HepG2 (cell line): ENCODE measurements at regions of chr3 and their contacts with region 1.

Region 1: GRCh38 chr3:20039766-20040475 is at the start of gene KAT2B:
- DNase-seq: peak; percentile 47
- ATAC-seq: peak; percentile 81
- H3K4me3 ChIP-seq: peak within 1 kb of the TSS; percentile 76 to 84 (median 78)
- H3K27ac ChIP-seq: peak within 1 kb of the TSS; percentile 46
- H3K4me1 ChIP-seq: peaks cover 36% of the 10 kb centered on the region
- H3K27me3 ChIP-seq: peaks cover 0 to 1% of the 10 kb centered on the region in 2 experiments; a peak in 3 of 5 replicates
- CTCF ChIP-seq: peak; percentile 77
- EP300 ChIP-seq: no peak
- POLR2A ChIP-seq: no peak
- RAD21 ChIP-seq: peak; percentile 57
- total RNA-seq, gene KAT2B: 0.97 and 1.00 TPM in 2 replicates

Region 2: DNA sequence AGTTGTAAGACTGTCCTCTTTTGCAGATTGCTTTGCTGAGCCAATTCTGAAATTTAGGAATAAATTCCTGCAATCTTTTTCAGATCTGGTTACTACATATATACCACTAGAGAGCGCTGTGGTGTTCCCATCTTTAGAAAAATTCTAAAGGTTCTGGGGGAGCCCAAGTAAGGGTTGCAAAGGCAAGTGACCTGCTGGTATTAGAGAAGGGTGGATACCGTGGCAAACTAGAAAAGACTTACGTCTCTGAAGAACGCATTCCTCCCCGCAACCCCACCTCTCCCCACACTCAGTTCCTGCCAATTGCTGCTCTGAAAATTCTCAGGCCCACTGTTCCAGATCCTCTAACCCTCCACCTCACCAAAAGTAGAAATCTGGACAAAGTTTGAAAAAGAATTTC is 154.5 kb before region 1 on chr3:
- CTCF ChIA-PET with region 1: no interaction called
- POLR2A ChIA-PET with region 1: no interaction called
- in situ Hi-C with region 1: no loop called
- intact Hi-C with region 1: loop called (anchors 1 kb)
- DNase-seq: peak; percentile 30
- ATAC-seq: peak; percentile 67
- H3K4me3 ChIP-seq: no peak overlapping the region
- H3K27ac ChIP-seq: no peak overlapping the region
- H3K4me1 ChIP-seq: peaks cover 15% of the 10 kb centered on the region; the same call in 1 of the 2 replicates
- H3K27me3 ChIP-seq: no peaks in the 10 kb centered on the region
- CTCF ChIP-seq: peak; percentile 56
- EP300 ChIP-seq: no peak
- POLR2A ChIP-seq: no peak
- RAD21 ChIP-seq: no peak

Region 3: GRCh38 chr3:19946832-19947548 is 92.9 kb before region 1 on chr3 and contains the start of gene RAB5A:
- CTCF ChIA-PET with region 1: no interaction called
- POLR2A ChIA-PET with region 1: interaction called, 5 read pairs
- in situ Hi-C with region 1: no loop called
- intact Hi-C with region 1: loop called (anchors 2 kb)
- DNase-seq: peak; percentile 94
- ATAC-seq: peak; percentile 94
- H3K4me3 ChIP-seq: peak within 1 kb of the TSS; percentile 73 to 98 (median 90)
- H3K27ac ChIP-seq: peak within 1 kb of the TSS; percentile 88
- H3K4me1 ChIP-seq: peaks cover 29% of the 10 kb centered on the region
- H3K27me3 ChIP-seq: no peaks in the 10 kb centered on the region; a peak in 1 of 5 replicates
- CTCF ChIP-seq: no peak
- EP300 ChIP-seq: 0 out of 4 replicates have a peak, but pooled peaks have one; percentile 27 to 35
- POLR2A ChIP-seq: peak; percentile 59 to 91
- RAD21 ChIP-seq: peak; percentile 8; the same call in 1 of the 2 replicates
- total RNA-seq, gene RAB5A: 27.1 and 29.3 TPM in 2 replicates

Region 4: DNA sequence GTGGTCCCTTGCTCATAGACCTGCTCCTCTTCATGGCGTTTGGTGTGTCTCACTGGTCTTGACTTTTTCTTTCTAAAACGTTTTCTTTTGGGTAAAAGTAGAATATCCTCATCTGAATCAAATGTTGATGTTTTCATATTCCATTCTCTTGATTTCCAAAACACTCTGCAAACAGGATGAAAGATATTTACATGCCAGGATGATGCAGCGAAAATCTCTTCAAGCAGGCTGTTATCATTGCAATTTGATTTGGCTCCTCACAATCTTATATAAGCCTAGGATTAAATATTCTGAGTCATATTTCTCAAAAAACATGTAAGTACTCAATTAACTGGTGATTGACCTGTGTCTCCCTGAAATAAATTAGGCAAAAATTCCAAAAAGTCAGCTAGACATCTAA is 38.0 kb before region 1 on chr3:
- CTCF ChIA-PET with region 1: no interaction called
- POLR2A ChIA-PET with region 1: no interaction called
- in situ Hi-C with region 1: no loop called
- intact Hi-C with region 1: loop called (anchors 5 kb)
- DNase-seq: no peak
- ATAC-seq: no peak
- H3K4me3 ChIP-seq: no peak overlapping the region
- H3K27ac ChIP-seq: no peak overlapping the region
- H3K4me1 ChIP-seq: no peaks in the 10 kb centered on the region
- H3K27me3 ChIP-seq: no peaks in the 10 kb centered on the region
- CTCF ChIP-seq: no peak
- EP300 ChIP-seq: no peak
- POLR2A ChIP-seq: no peak
- RAD21 ChIP-seq: no peak

Region 5: GRCh38 chr3:20125897-20126296 is 86.0 kb after region 1 on chr3:
- CTCF ChIA-PET with region 1: no interaction called
- POLR2A ChIA-PET with region 1: no interaction called
- in situ Hi-C with region 1: no loop called
- intact Hi-C with region 1: loop called (anchors 5 kb)
- DNase-seq: no peak
- ATAC-seq: no peak
- H3K4me3 ChIP-seq: no peak overlapping the region
- H3K27ac ChIP-seq: no peak overlapping the region
- H3K4me1 ChIP-seq: no peaks in the 10 kb centered on the region
- H3K27me3 ChIP-seq: no peaks in the 10 kb centered on the region; a peak in 1 of 5 replicates
- CTCF ChIP-seq: no peak
- EP300 ChIP-seq: no peak
- POLR2A ChIP-seq: no peak
- RAD21 ChIP-seq: no peak

Region 6: DNA sequence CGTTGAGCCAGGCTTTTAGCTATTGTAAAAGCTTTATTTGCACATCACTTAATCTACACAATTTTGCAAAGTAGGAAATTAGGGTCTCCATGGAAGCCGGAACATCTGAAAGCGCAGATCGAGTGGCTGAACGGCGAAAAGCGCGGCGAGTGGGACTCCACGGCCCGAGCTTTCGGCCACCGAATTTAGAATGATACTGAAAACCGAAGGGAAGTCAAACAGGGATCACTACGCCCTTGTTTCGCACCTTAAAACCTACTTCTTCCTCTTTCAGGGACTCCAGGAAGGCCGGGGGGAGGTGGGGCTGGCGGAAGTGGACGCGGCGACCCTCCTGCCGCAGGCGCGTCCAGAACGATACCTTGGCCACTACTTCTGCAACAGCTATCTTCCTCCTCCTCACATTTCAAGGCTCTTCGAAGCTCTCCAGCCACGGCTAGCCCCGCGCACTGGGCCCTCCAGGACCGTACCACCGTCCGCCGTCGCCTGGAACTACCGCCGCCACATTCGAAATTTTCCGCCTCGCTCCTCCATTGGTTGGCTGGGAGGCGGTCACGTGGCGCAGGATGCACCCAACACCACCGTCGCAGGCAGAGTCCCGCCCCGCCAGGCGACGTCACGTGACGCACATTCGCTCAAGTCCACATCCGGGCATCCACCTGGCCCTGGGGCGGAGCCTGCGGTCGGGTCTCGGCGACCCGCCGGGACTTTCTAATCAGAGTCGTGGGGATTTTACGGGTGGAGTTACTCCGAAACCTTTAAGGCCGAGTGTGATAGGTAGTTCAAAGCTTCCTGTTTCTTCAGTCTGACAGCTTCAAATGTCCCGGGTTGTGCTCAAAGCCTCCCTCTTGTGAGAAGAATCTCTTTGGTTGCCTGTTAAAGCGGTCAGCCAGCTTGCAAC is 146.0 kb after region 1 on chr3 and contains the start of gene SGO1:
- CTCF ChIA-PET with region 1: no interaction called
- POLR2A ChIA-PET with region 1: no interaction called
- in situ Hi-C with region 1: no loop called
- intact Hi-C with region 1: loop called (anchors 1 kb)
- DNase-seq: peak; percentile 94
- ATAC-seq: peak; percentile 98
- H3K4me3 ChIP-seq: peak within 1 kb of the TSS; percentile 91 to 99 (median 93)
- H3K27ac ChIP-seq: peak within 1 kb of the TSS; percentile 91
- H3K4me1 ChIP-seq: peaks cover 21% of the 10 kb centered on the region
- H3K27me3 ChIP-seq: no peaks in the 10 kb centered on the region; a peak in 1 of 5 replicates
- CTCF ChIP-seq: 0 out of 2 replicates have a peak, but pooled peaks have one; percentile 6
- EP300 ChIP-seq: no peak
- POLR2A ChIP-seq: peak; percentile 77 to 88
- RAD21 ChIP-seq: no peak
- total RNA-seq, gene SGO1: 16.1 and 23.8 TPM in 2 replicates

Region 7: DNA sequence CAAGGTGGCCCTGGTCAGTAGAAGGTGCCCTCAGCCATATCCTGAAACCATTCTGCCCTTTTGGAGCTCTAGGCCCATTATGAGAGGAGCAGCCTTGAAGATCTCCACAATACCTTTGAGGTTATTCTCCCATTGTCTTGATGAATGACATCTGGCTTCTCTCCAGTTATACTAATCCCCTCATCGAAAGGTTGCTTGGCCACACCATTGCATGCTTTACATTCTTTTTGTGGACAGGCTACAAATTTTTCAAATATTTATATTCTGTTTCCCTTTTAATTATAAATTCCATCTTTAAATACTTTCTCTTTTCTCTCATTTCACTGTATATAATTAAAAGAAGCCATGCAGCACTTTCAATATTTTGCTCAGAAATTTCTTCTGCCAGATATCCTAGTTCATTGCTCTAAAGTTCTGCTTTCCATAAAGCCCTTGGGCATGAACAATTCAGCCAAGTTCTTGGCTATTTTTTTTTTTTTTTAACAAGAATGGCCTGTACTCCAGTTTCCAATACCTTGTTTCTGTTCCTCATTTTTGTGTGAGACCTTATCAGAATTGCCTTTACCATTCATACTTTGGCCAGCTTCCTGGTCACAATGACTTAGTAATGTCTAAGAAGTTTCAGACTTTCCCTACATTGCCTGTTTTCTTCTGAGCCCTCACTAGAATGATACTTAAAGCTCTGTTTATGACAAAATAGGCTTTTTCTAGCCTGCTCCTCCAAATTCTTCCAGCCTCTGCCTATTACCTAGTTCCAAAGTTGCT is 285.0 kb after region 1 on chr3:
- CTCF ChIA-PET with region 1: no interaction called
- POLR2A ChIA-PET with region 1: no interaction called
- in situ Hi-C with region 1: no loop called
- intact Hi-C with region 1: loop called (anchors 5 kb)
- DNase-seq: no peak
- ATAC-seq: no peak
- H3K4me3 ChIP-seq: no peak overlapping the region
- H3K27ac ChIP-seq: no peak overlapping the region
- H3K4me1 ChIP-seq: peaks cover 47% of the 10 kb centered on the region
- H3K27me3 ChIP-seq: no peaks in the 10 kb centered on the region
- CTCF ChIP-seq: no peak
- EP300 ChIP-seq: no peak
- POLR2A ChIP-seq: no peak
- RAD21 ChIP-seq: no peak